ENCODE measurements at regions of chr2 and their contacts with region 1.

Region 1: GRCh38 chr2:173402405-173402974 is 47.8 kb downstream of the CDCA7 start:
- DNase-seq: peak; percentile 85
- ATAC-seq: peak; percentile 96
- H3K4me3 Mint-ChIP-seq: no peak overlapping the region
- H3K27ac Mint-ChIP-seq: no peak overlapping the region
- H3K4me1 Mint-ChIP-seq: peaks cover 5% of the 10 kb centered on the region
- H3K27me3 Mint-ChIP-seq: peaks cover 43% of the 10 kb centered on the region

Region 2: DNA sequence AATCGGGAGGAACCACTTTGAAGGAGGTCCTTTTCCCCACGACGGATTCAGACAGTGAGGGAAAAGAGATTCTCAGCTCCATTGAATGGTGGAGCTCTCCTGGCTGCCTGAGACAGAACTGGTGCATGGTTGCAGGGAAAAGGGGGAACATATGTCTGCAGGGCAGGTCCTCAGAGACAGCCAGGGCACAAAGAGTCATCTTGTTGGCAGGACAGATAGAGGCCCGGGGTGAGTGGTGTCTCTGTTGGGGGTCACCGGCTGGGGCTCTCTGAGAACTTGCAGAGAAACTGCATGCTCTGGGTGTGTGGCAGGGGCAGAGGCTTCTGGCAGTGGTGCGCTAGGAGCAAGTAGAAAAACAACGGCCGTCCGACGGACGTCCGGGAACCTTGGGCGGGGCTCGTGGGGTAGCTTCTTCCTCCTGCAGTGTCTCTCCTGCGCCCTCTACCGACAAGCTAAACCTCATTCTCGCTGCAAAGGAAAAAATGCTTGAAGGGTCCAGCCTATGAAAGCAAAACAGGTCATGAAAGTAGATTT is 46.5 kb after region 1 on chr2:
- CTCF ChIA-PET with region 1: interaction called, 22 read pairs
- POLR2A ChIA-PET with region 1: no interaction called
- intact Hi-C with region 1: loop called (anchors 1 kb)
- DNase-seq: peak; percentile 81
- ATAC-seq: peak; percentile 74
- H3K4me3 Mint-ChIP-seq: peak overlapping the region; percentile 35
- H3K27ac Mint-ChIP-seq: peak overlapping the region; percentile 38
- H3K4me1 Mint-ChIP-seq: peaks cover 12% of the 10 kb centered on the region
- H3K27me3 Mint-ChIP-seq: peaks cover 2% of the 10 kb centered on the region

Region 3: GRCh38 chr2:173571021-173571882 is 168.8 kb after region 1 on chr2:
- CTCF ChIA-PET with region 1: interaction called, 7 read pairs
- POLR2A ChIA-PET with region 1: no interaction called
- intact Hi-C with region 1: loop called in 1 of 2 experiments (anchors 2 kb)
- DNase-seq: no peak
- ATAC-seq: no peak
- H3K4me3 Mint-ChIP-seq: no peak overlapping the region
- H3K27ac Mint-ChIP-seq: no peak overlapping the region
- H3K4me1 Mint-ChIP-seq: peaks cover 4% of the 10 kb centered on the region
- H3K27me3 Mint-ChIP-seq: peaks cover 4% of the 10 kb centered on the region